Aorta (tissue), 5 donors: ENCODE measurements at regions of chr19 and their contacts with region 1.

Region 1: GRCh38 chr19:34336781-34337271 is 28.2 kb upstream of the GPI start:
- DNase-seq: no peak
- ATAC-seq: no peak
- H3K4me3 ChIP-seq: no peak overlapping the region
- H3K27ac ChIP-seq: no peak overlapping the region
- H3K4me1 ChIP-seq: no peaks in the 10 kb centered on the region
- H3K27me3 ChIP-seq: no peaks in the 10 kb centered on the region

Region 2: GRCh38 chr19:34220472-34221063 is 116.3 kb before region 1 on chr19:
- intact Hi-C with region 1: loop called (anchors 10 kb)
- DNase-seq: peak in 1 of 2 donors; percentile 68
- ATAC-seq: no peak
- H3K4me3 ChIP-seq: no peak overlapping the region
- H3K27ac ChIP-seq: no peak overlapping the region
- H3K4me1 ChIP-seq: peaks cover 0 to 4% of the 10 kb centered on the region in 2 donors
- H3K27me3 ChIP-seq: no peaks in the 10 kb centered on the region

Region 3: GRCh38 chr19:34254552-34255432 is 82.0 kb before region 1 on chr19 and contains the start of gene GARRE1:
- intact Hi-C with region 1: loop called in 1 of 2 experiments (anchors 5 kb)
- DNase-seq: peak in 1 of 2 donors; percentile 80
- ATAC-seq: peak; percentile 67
- H3K4me3 ChIP-seq: peak within 1 kb of the TSS; percentile 92 to 100
- H3K27ac ChIP-seq: peak within 1 kb of the TSS; percentile 20 to 87
- H3K4me1 ChIP-seq: peaks cover 1 to 2% of the 10 kb centered on the region in 2 donors
- H3K27me3 ChIP-seq: no peaks in the 10 kb centered on the region
- total RNA-seq, gene GARRE1: 49.0 to 73.2 TPM

Region 4: GRCh38 chr19:34269968-34270621 is 66.7 kb before region 1 on chr19:
- intact Hi-C with region 1: loop called in 1 of 2 experiments (anchors 10 kb)
- DNase-seq: peak; percentile 80 to 81
- ATAC-seq: peak; percentile 76
- H3K4me3 ChIP-seq: no peak overlapping the region
- H3K27ac ChIP-seq: peak overlapping the region; percentile 87 to 97
- H3K4me1 ChIP-seq: peaks cover 5 to 7% of the 10 kb centered on the region in 2 donors
- H3K27me3 ChIP-seq: no peaks in the 10 kb centered on the region

Region 5: DNA sequence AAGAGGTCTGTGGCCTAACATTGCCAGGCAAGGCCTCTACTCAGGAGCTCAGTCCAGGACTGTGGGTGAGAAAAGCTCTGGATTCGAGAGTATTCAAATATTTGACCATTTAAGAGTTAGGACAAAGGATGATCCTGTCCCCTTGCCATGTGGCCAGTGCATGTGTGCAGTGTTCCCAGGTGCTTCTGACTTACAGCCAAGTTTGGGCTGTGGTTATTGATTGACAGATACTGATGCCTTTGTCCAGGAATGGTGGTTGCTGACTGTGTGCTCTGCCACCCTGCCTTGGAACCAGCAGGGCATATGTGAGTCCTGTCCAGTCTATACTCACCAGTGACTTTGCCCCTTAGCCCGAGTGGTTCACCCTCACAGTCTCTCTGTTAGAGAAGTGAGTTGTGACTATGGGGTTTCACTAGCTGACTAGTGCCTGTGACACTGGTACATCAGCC is 30.6 kb before region 1 on chr19:
- intact Hi-C with region 1: no loop called
- DNase-seq: no peak
- ATAC-seq: peak; percentile 53
- H3K4me3 ChIP-seq: no peak overlapping the region
- H3K27ac ChIP-seq: peak overlapping the region; percentile 38 to 94
- H3K4me1 ChIP-seq: peaks cover 0 to 3% of the 10 kb centered on the region in 2 donors
- H3K27me3 ChIP-seq: no peaks in the 10 kb centered on the region

Region 6: GRCh38 chr19:34409189-34410164 is 72.7 kb after region 1 on chr19:
- intact Hi-C with region 1: no loop called
- DNase-seq: peak in 1 of 2 donors; percentile 11
- ATAC-seq: no peak
- H3K4me3 ChIP-seq: no peak overlapping the region
- H3K27ac ChIP-seq: no peak overlapping the region
- H3K4me1 ChIP-seq: no peaks in the 10 kb centered on the region
- H3K27me3 ChIP-seq: no peaks in the 10 kb centered on the region